HEK293T (cell line): ENCODE measurements at regions of chr17 and their contacts with region 1.

Region 1: DNA sequence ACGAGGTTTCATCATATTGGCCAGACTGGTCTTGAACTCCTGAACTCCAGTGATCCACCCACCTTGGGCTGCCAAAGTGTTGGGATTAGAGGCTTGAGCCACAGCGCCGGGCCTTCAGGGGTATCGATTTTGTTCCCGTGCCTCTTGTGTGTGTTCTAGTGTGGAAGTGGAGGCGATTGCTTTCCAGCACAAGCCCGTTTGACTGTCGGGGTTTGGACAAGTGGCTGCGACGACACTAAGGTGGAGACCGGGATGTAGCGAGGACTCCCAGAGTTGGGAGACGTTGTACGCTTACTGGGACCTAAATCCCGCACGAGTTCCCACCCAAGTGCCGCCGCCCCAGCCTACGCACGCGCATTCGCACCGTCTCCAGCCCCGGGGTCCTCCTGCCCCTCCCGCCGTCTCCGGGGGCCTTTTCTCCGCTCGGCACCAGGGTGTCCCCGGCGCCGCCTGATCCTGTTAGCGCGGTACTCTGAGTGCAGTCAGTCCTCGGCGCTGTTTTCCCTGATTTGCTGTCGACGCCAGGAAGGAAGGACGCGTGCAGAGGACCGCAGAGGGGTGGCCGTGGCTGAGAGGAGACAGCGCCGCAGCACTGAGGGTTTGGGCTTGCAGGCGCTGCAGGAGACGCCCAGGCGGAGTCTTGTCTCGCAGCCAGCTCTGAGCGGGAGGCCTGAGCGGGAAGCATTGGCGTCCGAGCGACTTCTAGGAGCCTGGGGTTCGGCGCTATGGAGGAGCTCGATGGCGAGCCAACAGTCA is at the start of gene NUP85:
- DNase-seq: peak; percentile 99

Region 2: DNA sequence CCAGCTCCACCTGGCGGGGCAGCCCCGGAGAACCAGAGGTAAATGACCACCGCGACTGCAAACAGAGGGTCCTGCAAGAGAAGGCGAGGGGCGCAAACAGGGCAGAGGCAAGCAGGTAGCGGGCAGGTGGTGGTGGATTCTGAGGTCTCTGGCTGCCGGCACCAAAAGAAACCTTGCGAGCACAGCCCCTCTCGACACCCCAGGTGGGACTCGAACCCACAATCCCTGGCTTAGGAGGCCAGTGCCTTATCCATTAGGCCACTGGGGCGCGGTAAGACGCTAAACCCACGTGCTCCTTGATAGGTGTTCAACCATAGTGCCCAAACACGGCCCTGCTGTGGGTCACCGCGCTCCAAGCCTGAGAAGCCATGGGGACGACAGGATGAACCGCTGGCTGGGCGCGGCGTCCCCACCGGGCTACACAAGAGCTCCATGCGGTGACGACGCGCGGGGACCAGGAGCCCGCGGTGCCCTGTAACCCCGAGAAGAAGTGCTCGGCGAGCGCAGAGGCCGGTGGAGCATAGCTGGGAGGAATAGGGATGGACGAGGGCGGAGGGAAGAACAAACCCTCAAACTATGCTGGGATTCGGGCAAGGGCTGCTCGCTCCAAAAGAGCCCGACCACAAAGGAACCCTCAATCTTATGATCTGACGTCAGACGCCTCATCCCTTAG is 170.8 kb before region 1 on chr17:
- CTCF ChIA-PET with region 1: interaction called, 3 read pairs
- POLR2A ChIA-PET with region 1: interaction called, 11 read pairs
- DNase-seq: peak; percentile 69

Region 3: DNA sequence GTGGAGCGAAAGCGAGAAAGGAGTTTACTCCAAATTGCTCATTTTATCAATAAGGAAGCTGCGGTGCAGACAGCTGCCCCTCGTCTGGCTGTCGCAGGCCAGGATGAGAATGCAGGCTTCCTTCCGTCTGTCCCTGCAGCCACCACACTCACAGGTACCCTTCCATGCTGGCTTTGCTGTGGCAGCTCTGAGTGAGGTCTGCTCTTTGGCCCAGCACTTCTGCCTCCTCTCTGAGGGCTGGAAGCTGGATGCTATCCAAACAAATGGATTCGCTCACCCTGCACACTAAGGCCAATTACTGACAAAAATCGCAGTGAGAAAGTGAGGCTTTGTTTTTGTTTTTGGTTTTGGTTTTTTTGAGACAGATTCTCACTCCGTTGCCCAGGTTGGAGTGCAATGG is 88.5 kb before region 1 on chr17:
- CTCF ChIA-PET with region 1: interaction called, 44 read pairs
- POLR2A ChIA-PET with region 1: interaction called, 8 read pairs
- DNase-seq: no peak

Region 4: DNA sequence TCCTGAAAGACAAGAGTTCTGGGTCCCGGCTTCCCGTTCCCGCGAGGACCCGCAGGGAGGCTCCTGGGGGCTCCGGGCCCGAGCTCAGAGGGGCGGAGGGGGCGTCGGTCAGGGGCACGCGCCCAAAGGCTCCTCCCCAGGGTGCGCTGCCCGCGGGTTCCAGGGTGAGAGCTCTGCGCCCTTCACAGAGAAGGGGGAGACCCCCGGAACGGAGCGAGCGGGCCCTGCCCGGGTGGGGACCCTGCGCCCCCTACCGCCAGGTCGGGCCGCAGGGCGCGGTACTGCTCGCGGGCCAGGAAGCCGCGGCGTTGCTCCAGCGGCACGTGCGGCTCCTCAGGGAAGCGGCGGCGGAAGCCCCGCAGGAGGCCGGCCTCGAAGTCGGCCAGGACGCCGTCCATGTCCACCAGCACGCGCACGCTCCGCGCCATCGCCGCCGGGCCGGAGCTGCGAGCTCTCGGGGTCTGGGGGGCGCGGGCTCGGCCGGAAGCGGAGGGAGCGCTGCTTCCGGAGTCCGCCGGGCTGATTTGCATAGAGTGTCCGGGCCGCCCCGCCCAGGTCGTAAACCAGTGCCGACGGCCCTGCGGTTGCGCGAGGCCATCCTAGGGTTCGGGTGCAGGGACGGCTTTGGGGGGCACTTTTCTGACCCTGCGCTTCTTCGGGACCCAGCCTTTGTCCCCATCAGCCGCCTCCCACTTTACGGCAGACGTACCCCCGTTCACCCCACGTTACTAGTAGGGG is 73.8 kb before region 1 on chr17 and contains the start of gene NT5C:
- CTCF ChIA-PET with region 1: interaction called, 6 read pairs
- POLR2A ChIA-PET with region 1: interaction called, 19 read pairs
- DNase-seq: peak; percentile 91

Region 5: DNA sequence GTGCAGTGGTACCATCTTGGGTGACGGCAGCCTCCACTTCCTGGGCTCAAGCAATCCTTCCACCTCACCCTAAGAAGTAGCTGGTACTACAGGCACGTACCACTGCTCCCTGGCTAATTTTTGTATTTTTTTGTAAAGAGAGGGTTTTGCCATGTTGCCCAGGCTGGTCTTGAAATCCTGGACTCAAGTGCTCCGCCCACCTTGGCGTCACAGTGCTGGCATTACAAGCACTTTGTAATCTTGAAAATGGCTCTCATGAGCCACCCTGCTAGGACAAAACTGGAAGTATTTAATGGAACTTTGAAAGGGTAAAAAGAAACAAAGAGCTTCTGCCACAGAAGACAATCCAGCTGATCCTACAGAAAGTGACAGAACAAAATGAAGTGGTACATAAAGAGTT is 31.7 kb before region 1 on chr17:
- CTCF ChIA-PET with region 1: interaction called, 10 read pairs
- POLR2A ChIA-PET with region 1: no interaction called
- DNase-seq: no peak

Region 6: GRCh38 chr17:75182569-75183450 is 22.4 kb before region 1 on chr17 and contains the start of gene SUMO2:
- CTCF ChIA-PET with region 1: interaction called, 16 read pairs
- POLR2A ChIA-PET with region 1: interaction called, 16 read pairs
- DNase-seq: peak; percentile 99

Region 7: DNA sequence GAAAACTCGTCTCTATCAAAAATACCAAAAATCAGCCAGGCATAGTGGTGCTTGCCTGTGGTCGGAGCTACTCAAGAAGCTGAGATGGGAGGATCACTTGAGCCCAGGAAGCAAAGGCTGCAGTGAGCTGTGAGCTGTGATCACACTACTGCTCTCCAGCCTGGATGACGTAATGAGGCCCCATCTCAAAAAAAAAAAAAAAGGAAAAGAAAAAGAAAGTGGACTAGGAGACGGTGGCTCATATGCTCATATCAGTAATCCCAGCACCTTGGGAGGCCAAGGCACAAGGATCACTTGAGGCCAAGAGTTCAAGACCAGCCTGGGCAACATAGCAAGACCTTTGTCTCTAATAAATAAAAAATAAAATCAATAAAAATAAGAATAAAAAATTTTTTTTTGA is 13.6 kb before region 1 on chr17:
- CTCF ChIA-PET with region 1: interaction called, 16 read pairs
- POLR2A ChIA-PET with region 1: interaction called, 16 read pairs
- DNase-seq: no peak